GM18951 (cell line): ENCODE measurements at regions of chr18 and their contacts with region 1.

Region 1: DNA sequence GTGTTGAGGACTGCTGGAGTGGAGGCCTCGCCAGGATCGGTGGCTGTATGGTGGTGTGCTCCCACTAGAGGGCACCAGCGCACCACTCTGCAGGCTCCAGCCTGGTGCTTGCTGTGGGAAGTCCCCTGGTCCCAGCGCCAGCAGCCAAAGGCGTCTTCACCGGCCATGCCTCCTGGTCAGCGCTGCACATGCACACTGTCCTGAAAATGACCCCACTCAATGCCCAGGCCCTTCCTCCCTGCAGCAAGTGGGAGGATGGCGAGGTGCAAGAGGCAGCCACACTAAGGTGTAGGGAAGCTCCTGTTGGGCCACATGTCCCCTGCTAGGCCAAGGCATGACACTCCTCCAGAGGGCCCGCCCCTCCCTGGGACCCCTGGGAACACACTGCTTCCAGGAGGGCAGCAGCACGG is 136.5 kb downstream of the CTIF start:
- POLR2A ChIP-seq: no peak

Region 2: GRCh38 chr18:49249521-49249920 is 574.2 kb after region 1 on chr18:
- in situ Hi-C with region 1: loop called (anchors 10 kb)
- POLR2A ChIP-seq: no peak

Region 3: DNA sequence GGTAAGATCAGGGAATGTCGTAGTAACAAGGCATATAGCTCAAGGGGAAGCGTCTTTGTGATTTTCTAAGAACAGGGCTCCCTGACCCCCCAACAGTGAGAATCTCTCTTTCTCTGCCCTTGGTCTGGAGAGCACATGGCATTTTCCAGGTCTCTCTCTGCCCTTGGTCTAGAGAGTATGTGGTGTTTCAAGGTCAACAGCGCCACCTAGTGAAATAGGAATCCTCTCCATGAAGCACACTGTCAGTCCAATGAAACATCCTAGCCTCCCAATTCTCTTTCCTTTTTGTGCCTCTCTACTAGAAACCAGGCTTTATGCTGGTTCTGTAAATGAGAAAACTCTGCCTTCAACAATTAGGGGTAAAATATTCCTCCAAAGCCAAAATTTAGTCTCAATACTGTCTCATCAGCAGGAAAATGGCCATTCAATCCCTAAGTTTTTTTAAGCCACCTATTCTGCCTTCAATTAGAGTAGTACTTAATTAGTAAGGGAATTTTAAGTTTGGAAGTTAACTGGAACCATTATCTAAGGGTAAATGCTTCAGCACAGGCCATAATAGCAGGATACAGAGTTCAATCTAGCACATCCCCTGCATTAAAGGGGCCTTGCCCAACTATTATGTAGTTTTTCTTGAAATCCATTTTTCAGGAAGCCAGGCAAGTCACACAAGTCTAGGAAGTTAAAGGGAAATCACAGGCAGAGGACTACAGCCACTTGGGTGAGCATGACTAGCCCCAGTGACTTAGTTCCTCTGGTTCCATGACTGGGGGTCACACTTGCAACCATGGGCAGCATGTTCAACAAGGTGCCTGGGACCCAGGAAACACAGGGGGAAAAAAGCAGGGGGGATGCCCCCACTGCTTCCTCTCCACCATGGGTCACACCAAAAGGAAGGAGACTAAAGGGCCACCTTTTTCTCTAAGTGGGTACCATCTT is 772.7 kb after region 1 on chr18:
- in situ Hi-C with region 1: loop called (anchors 25 kb)
- POLR2A ChIP-seq: no peak

Region 4: GRCh38 chr18:49858309-49859020 is 1183.1 kb after region 1 on chr18:
- in situ Hi-C with region 1: loop called (anchors 25 kb)
- POLR2A ChIP-seq: no peak